ENCODE measurements at regions of chrX and their contacts with region 1.

Region 1: DNA sequence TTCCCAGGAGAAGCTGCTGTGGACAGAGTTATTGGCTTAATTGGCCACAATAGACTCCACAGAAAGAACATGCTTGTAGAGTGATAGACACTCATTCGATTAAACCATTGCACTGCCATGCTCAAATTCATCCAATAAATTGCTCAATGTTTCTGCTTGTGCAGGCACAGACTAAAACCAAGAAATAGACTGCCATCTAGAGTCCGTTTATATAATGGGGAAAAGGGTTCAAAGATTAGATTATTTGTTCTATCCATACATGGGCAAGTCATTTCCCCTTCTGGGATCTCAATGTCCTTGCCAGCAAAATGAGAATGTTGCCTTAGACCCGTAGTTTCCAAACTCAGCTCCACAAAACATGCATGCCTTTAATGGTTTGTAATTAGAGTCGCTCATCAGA is 8.7 kb downstream of the SMIM10 start:
- DNase-seq: peak; percentile 22 to 54
- ATAC-seq: peak in 1 of 2 experiments; percentile 52; a peak in 3 of 6 replicates
- H3K4me3 ChIP-seq: no peak overlapping the region
- H3K27ac ChIP-seq: peak overlapping the region; percentile 72 to 83
- H3K4me1 ChIP-seq: peaks cover 31% of the 10 kb centered on the region
- CTCF ChIP-seq: peak; percentile 67
- EP300 ChIP-seq: no peak
- POLR2A ChIP-seq: no peak
- RAD21 ChIP-seq: peak; percentile 72 to 79

Region 2: GRCh38 chrX:134963041-134963440 is 36.4 kb before region 1 on chrX:
- CTCF ChIA-PET with region 1: interaction called, 20 read pairs
- POLR2A ChIA-PET with region 1: no interaction called
- DNase-seq: no peak
- ATAC-seq: no peak
- H3K4me3 ChIP-seq: no peak overlapping the region
- H3K27ac ChIP-seq: no peak overlapping the region
- H3K4me1 ChIP-seq: peaks cover 3% of the 10 kb centered on the region; the same call in 1 of the 3 replicates
- CTCF ChIP-seq: no peak
- EP300 ChIP-seq: no peak
- POLR2A ChIP-seq: no peak
- RAD21 ChIP-seq: no peak

Region 3: DNA sequence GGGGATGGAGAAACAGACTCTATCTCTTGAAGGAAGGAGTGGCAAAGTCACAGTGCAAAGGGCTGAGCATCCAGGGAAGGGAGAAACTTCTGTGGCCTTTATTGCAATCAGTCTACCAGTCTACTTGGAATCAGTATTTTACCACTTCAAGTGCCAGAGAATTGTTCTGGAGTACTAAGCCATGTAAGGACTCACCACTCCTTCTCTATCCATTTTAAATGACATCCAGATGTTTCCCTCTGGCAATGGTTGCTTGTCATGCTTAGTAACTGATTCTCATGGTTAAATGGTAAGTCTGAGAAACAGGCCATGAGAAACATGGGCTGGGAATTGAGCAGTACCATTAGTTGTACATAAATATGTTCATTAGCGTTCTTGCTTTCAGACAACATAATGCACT is 29.7 kb before region 1 on chrX:
- CTCF ChIA-PET with region 1: interaction called, 20 read pairs
- POLR2A ChIA-PET with region 1: no interaction called
- DNase-seq: no peak
- ATAC-seq: no peak
- H3K4me3 ChIP-seq: no peak overlapping the region
- H3K27ac ChIP-seq: no peak overlapping the region
- H3K4me1 ChIP-seq: peaks cover 3% of the 10 kb centered on the region; the same call in 1 of the 3 replicates
- CTCF ChIP-seq: no peak
- EP300 ChIP-seq: no peak
- POLR2A ChIP-seq: no peak
- RAD21 ChIP-seq: no peak

Region 4: GRCh38 chrX:134985479-134985878 is 14.0 kb before region 1 on chrX:
- CTCF ChIA-PET with region 1: interaction called, 13 read pairs
- POLR2A ChIA-PET with region 1: no interaction called
- DNase-seq: no peak
- ATAC-seq: no peak
- H3K4me3 ChIP-seq: no peak overlapping the region
- H3K27ac ChIP-seq: no peak overlapping the region
- H3K4me1 ChIP-seq: no peaks in the 10 kb centered on the region
- CTCF ChIP-seq: no peak
- EP300 ChIP-seq: no peak
- POLR2A ChIP-seq: no peak
- RAD21 ChIP-seq: no peak